Activated CD4-positive, alpha-beta T cell treated with anti-CD3 and anti-CD28 coated beads, Interleukin-2, amount 10 ng/mL, durations not matched to agents 24 days and 14 days (primary cell): ENCODE measurements at regions of chr18 and their contacts with region 1.

Region 1: GRCh38 chr18:12657684-12658425 is at the start of gene SPIRE1:
- DNase-seq: peak; percentile 86
- H3K4me3 Mint-ChIP-seq: peak within 1 kb of the TSS; percentile 86
- H3K27ac Mint-ChIP-seq: peak within 1 kb of the TSS; percentile 77
- H3K4me1 Mint-ChIP-seq: peaks cover 25% of the 10 kb centered on the region
- H3K27me3 Mint-ChIP-seq: peaks cover 23% of the 10 kb centered on the region
- total RNA-seq, gene SPIRE1: 7.6 and 8.4 TPM in 2 replicates

Region 2: DNA sequence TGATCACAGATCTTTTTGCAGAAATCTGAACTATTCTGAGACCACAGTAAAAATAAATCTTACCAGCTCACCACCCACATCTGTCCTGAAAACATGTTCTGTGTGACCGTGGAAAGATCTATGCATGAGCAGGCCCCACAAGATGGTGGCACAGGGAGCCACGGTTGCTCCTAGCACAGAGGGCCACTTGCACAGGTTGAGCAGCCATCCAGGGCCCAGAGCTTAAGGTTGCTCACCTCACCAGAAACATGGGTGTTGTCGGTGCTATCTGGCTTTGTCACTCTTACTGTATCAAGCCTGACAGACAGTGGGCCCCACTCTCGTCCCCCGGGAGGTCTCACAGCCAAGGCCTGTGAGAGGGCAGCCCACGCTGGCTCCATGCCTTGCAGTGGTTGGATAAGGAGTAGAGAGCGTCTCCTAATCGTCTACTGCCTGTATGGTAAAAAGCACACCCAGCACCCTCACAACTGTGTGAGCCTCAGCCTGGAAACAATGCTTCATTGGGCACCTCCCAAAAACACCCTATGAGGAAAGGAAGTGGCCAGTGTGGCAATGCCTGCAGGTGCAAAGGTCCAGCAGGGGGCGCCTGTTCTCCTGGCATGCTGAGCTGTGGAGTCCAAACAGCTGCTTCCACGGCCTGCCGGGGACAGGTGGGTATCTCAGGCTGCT is 330.2 kb before region 1 on chr18:
- intact Hi-C with region 1: loop called (anchors 1 kb)
- DNase-seq: peak; percentile 92
- H3K4me3 Mint-ChIP-seq: no peak overlapping the region
- H3K27ac Mint-ChIP-seq: peak overlapping the region; percentile 58
- H3K4me1 Mint-ChIP-seq: peaks cover 7% of the 10 kb centered on the region
- H3K27me3 Mint-ChIP-seq: no peaks in the 10 kb centered on the region

Region 3: GRCh38 chr18:12408247-12408869 is 249.5 kb before region 1 on chr18:
- intact Hi-C with region 1: loop called (anchors 5 kb)
- DNase-seq: no peak
- H3K4me3 Mint-ChIP-seq: peak overlapping the region; percentile 79
- H3K27ac Mint-ChIP-seq: peak overlapping the region; percentile 72
- H3K4me1 Mint-ChIP-seq: peaks cover 33% of the 10 kb centered on the region
- H3K27me3 Mint-ChIP-seq: peaks cover 35% of the 10 kb centered on the region

Region 4: DNA sequence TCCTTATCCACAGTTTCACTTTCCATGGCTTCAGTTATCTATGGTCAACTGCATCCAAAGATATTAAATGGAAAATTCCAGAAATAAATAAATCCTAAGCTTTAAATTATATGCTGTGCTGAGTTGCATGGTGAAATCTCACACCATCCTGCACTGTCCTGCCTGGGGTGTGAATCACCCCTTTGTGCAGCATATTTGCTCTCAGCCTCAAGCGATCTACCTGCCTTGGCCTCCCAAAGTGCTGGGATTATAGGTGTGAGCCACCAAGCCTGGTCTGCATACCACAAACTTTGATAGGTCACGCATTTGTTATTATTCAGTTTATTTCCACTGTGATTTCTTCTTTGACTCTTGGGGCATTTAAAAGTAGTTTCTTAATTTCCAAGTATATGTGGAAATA is 117.1 kb before region 1 on chr18:
- intact Hi-C with region 1: loop called (anchors 1 kb)
- DNase-seq: no peak
- H3K4me3 Mint-ChIP-seq: no peak overlapping the region
- H3K27ac Mint-ChIP-seq: no peak overlapping the region
- H3K4me1 Mint-ChIP-seq: peaks cover 7% of the 10 kb centered on the region
- H3K27me3 Mint-ChIP-seq: peaks cover 15% of the 10 kb centered on the region